ENCODE measurements at regions of chr5 and their contacts with region 1.

Region 1: GRCh38 chr5:116144103-116144502 is 59.3 kb downstream of the COMMD10 start:
- DNase-seq: no peak

Region 2: GRCh38 chr5:116023619-116024018 is 120.5 kb before region 1 on chr5:
- intact Hi-C with region 1: no loop called
- DNase-seq: no peak

Region 3: DNA sequence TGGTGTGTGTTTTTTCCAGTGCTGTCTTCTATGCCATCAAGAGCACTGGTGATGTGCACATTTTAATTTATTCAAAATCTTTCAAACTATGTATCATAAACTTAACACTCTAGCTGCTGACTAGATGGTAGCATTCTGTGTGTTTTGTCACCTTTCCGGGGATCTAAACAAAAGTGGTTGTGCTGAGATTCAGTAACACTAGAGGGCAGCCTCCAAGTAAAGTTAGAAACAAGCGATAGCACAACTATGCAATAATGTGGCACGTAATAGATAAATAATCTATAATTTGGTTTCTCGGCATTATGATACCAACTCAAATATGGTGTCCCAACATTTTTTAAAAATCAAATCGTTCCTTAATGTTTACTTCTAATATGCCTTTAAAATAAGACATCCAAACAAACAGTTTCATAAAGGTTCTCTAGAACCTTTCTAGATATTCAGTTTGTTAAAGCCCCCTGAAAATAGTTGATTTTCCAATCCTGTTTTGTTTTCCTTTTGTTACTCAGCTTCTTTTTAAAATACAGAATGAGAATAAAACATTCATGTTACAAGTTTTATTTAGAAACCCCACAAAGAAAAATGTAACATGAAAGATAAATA is 413.7 kb after region 1 on chr5:
- intact Hi-C with region 1: loop called (anchors 10 kb)
- DNase-seq: no peak